Activated CD4-positive, alpha-beta memory T cell treated with anti-CD3 and anti-CD28 coated beads for 36 hours (primary cell): ENCODE measurements at regions of chr5 and their contacts with region 1.

Region 1: GRCh38 chr5:173144200-173145176 is at the start of gene BNIP1:
- DNase-seq: peak; percentile 98
- H3K4me3 Mint-ChIP-seq: peak within 1 kb of the TSS; percentile 99
- H3K27ac Mint-ChIP-seq: peak within 1 kb of the TSS; percentile 97
- H3K4me1 Mint-ChIP-seq: peaks cover 9% of the 10 kb centered on the region
- H3K27me3 Mint-ChIP-seq: no peaks in the 10 kb centered on the region
- total RNA-seq, gene BNIP1: 19.3 to 20.9 TPM

Region 2: DNA sequence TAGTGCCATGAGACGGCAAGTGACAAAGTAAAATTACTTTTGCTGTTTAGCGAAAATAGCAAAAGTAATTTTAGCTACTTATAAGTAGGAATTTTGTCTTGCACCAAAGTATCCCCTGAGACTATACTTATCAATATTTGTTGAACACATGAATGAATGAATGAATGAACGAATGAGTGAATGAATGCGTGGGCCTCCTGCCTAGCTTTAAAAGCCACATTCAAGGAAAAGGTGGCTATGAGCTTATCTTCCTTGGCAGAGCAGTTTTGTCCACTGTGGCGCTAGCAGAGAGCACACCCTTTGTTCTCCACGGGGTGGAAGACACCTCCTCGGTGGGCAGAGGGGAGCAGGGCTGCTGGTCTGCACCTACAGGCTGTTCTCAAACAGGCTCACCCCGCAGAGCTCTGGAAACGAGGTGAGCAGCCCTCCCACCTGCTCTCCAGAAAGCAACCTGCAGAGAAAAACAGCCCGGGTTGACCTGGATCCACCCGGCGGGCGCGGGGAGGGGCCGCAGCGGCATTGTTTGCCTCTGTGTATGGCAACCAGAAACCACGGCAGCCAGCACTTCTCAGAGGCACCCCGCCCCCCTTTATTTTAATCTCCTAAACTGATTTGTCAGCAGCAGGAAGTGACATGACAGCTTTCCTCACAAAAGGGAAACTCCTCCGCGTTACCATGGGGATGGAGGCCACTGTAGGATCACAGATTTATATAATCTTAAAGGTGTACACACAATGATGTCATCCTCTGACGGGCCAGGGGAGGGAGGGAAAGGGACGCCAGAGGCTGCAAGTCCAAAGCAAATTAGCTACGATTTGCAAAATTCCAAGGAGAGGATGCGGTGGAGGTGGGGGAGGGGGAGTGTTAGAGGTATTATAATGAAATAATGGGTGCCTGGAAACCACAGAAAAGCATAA is 379.4 kb before region 1 on chr5:
- CTCF ChIA-PET with region 1: no interaction called
- POLR2A ChIA-PET with region 1: no interaction called
- intact Hi-C with region 1: loop called (anchors 2 kb)
- DNase-seq: peak; percentile 96
- H3K4me3 Mint-ChIP-seq: peak overlapping the region; percentile 78
- H3K27ac Mint-ChIP-seq: peak overlapping the region; percentile 90
- H3K4me1 Mint-ChIP-seq: peaks cover 46% of the 10 kb centered on the region
- H3K27me3 Mint-ChIP-seq: no peaks in the 10 kb centered on the region

Region 3: DNA sequence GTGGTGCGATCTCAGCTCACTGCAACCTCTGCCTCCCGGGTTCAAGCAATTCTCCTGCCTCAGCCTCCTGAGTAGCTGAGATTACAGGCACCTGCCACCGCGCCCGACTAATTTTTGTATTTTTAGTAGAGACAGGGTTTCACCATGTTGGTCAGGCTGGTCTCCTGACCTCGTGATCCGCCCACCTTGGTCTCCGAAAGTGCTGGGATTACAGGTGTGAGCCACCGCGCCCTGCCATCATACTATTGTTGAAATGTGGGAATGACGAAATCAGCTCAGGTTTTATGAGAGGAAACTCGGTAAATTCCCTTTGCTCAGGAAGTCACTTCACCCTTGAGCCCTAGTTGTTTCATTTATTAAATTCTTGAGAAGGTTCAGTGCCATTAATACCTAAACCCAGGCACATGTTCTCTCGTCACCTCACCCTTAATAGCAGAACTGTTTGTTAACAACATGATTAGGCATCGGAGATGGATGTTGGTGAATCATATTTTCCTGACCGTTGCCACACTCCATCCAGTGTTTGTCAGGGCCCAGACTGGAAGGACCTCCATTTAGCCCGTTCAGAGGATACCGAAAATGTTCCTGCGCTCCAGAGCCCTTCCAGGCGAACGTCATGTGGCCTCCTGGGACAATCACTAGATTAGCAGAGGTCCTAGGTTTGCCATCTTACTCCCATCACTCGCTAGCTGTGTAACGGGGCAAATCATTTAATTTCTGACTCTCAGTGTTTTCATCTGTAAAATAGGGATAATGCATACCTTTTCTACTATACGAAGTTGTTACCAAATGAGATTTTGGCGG is 108.4 kb before region 1 on chr5:
- CTCF ChIA-PET with region 1: interaction called, 4 read pairs
- POLR2A ChIA-PET with region 1: no interaction called
- intact Hi-C with region 1: loop called (anchors 1 kb)
- DNase-seq: peak; percentile 89
- H3K4me3 Mint-ChIP-seq: peak overlapping the region; percentile 78
- H3K27ac Mint-ChIP-seq: peak overlapping the region; percentile 98
- H3K4me1 Mint-ChIP-seq: peaks cover 64% of the 10 kb centered on the region
- H3K27me3 Mint-ChIP-seq: no peaks in the 10 kb centered on the region

Region 4: GRCh38 chr5:173065155-173065554 is 79.3 kb before region 1 on chr5:
- CTCF ChIA-PET with region 1: interaction called, 3 read pairs
- POLR2A ChIA-PET with region 1: interaction called, 3 read pairs
- intact Hi-C with region 1: loop called (anchors 2 kb)
- DNase-seq: no peak
- H3K4me3 Mint-ChIP-seq: peak overlapping the region; percentile 61
- H3K27ac Mint-ChIP-seq: peak overlapping the region; percentile 85
- H3K4me1 Mint-ChIP-seq: peaks cover 69% of the 10 kb centered on the region
- H3K27me3 Mint-ChIP-seq: no peaks in the 10 kb centered on the region

Region 5: GRCh38 chr5:173331956-173332479 is 187.5 kb after region 1 on chr5:
- CTCF ChIA-PET with region 1: no interaction called
- POLR2A ChIA-PET with region 1: no interaction called
- intact Hi-C with region 1: loop called (anchors 10 kb)
- DNase-seq: peak; percentile 91
- H3K4me3 Mint-ChIP-seq: no peak overlapping the region
- H3K27ac Mint-ChIP-seq: no peak overlapping the region
- H3K4me1 Mint-ChIP-seq: peaks cover 22% of the 10 kb centered on the region
- H3K27me3 Mint-ChIP-seq: peaks cover 39% of the 10 kb centered on the region